OCI-LY7 (cell line): ENCODE measurements at regions of chr10 and their contacts with region 1.

Region 1: GRCh38 chr10:68301790-68302502 is 29.9 kb upstream of the HNRNPH3 start:
- DNase-seq: peak; percentile 87
- H3K4me3 ChIP-seq: peak overlapping the region; percentile 50
- H3K27ac ChIP-seq: peak overlapping the region; percentile 99
- H3K4me1 ChIP-seq: peaks cover 49% of the 10 kb centered on the region
- CTCF ChIP-seq: peak; percentile 93

Region 2: GRCh38 chr10:67884313-67884841 is 417.6 kb before region 1 on chr10 and contains the start of gene SIRT1:
- CTCF ChIA-PET with region 1: no interaction called
- POLR2A ChIA-PET with region 1: interaction called, 3 read pairs
- intact Hi-C with region 1: loop called (anchors 10 kb)
- DNase-seq: peak; percentile 96
- H3K4me3 ChIP-seq: peak within 1 kb of the TSS; percentile 78
- H3K27ac ChIP-seq: peak within 1 kb of the TSS; percentile 75
- H3K4me1 ChIP-seq: peaks cover 17% of the 10 kb centered on the region
- CTCF ChIP-seq: peak; percentile 18; the same call in 1 of the 2 replicates
- total RNA-seq, gene SIRT1: 18.0 and 20.4 TPM in 2 replicates

Region 3: DNA sequence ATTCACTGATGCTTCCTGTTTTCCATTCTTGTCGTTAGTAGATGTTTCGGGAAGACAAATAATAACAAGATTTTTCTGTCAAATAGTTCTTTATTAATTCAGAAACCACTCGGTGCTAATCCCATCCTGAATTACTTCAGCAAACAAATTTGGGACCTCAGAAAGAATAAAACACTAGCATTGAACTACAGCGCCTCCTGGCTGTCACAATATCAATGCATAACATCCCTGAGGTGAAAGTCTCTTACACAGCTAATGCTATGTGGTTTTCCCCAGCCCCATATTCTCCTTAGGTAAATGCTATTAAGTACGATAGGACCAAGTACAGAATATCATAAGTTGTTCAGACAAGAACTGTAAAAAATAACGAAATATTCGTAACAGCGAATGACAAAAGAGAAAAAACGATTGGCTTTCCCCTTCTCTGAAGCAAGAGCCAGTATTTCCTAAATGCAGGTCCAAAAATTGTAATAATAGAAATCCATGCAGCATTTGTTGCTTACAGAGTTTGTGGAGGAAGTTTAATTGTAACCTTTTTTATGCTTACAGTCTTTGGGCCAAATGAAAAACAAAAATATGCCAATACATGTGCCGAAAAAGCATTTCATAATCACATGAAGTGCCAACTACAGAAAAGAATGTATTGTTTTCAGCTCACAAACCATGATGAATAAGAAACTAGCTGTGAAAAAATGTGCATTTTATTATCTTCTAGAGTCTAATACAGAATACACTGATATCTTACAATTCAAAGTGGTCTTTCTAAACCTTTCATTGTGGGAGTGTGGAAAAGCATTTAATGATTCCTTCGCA is 145.4 kb before region 1 on chr10:
- CTCF ChIA-PET with region 1: interaction called, 3 read pairs
- POLR2A ChIA-PET with region 1: interaction called, 6 read pairs
- intact Hi-C with region 1: loop called (anchors 2 kb)
- DNase-seq: peak; percentile 69
- H3K4me3 ChIP-seq: no peak overlapping the region
- H3K27ac ChIP-seq: no peak overlapping the region
- H3K4me1 ChIP-seq: no peaks in the 10 kb centered on the region
- CTCF ChIP-seq: peak; percentile 97

Region 4: DNA sequence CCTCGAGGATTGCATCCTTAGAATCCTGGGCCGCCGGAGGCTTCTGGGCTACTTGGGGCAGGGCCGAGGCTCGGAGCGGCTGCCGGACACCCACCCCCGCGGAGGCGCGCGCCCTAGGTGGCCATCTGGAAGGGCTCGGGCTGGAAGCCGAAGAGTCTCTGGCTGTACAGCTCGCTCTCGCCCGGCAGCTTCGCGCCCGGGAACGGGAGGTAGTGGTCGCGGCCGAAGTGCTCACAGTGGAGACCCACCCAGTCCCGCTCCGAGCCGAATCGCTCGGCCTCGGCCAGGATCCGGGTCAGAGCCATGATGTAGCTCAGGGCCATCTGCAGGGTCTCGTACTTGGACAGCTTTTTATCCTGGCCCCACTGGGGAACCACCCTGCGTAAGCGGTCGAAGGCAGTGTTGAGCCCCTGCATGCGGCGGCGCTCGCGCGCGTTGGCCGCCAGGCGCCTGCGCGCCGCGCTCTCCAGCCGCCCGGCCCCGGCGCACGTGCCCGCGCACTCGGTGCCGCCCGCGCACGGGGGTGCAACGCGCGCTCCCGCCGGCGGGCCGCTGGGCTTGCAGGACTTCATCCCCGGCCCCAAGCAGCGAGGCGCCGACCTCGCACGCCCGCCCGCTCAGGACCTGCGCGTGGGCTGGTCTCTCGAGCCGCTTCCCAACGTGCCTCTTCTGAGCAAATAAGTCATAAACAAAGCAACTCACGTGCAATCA is 70.7 kb before region 1 on chr10:
- CTCF ChIA-PET with region 1: no interaction called
- POLR2A ChIA-PET with region 1: interaction called, 10 read pairs
- intact Hi-C with region 1: loop called (anchors 5 kb)
- DNase-seq: peak; percentile 78
- H3K4me3 ChIP-seq: peak overlapping the region; percentile 67
- H3K27ac ChIP-seq: no peak overlapping the region
- H3K4me1 ChIP-seq: peaks cover 14% of the 10 kb centered on the region
- CTCF ChIP-seq: no peak

Region 5: DNA sequence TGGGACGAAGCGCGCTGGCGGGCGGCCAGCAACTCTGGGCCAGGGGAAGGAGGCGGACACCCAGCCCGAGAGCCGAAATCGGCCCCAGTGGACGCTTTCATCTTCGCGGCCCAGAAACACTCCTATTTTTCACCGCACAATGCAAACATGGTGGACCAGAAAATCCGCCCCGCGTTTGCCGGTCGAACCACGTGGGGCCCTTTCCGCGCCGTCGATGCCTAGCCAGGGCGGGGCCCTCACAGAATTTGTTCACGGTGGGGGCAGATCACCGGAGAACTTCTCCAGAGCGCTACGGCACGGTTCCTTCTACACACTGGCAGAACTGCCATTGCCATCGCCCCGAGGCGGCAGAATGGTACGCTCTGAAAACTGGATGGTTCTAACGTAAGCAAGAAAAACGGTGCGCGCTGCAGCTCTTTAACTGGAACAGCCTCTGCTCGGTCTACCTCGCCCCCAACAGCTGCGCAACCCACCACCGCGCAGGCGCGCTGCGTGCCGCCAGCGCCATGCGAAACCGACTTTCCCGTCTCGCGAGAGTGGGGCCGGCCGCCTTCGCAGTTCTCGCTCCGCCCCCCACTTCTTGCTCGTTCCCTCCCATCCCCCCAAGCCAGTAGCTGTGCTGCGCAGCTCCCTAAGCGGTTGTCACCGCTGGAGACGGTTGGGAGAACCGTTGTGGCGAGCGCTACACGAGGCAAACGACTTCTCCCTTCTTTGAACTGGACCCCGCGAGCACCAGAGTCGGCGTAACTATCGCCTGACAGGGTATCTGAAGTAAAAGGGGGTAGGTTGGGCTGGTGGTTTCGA is 29.7 kb after region 1 on chr10 and contains the start of gene HNRNPH3:
- CTCF ChIA-PET with region 1: no interaction called
- POLR2A ChIA-PET with region 1: interaction called, 28 read pairs
- intact Hi-C with region 1: no loop called
- DNase-seq: peak; percentile 99
- H3K4me3 ChIP-seq: peak within 1 kb of the TSS; percentile 85
- H3K27ac ChIP-seq: peak within 1 kb of the TSS; percentile 89
- H3K4me1 ChIP-seq: peaks cover 65% of the 10 kb centered on the region
- CTCF ChIP-seq: no peak
- total RNA-seq, gene HNRNPH3: 30.8 and 69.2 TPM in 2 replicates